ENCODE measurements at regions of chr20 and their contacts with region 1.

Region 1: DNA sequence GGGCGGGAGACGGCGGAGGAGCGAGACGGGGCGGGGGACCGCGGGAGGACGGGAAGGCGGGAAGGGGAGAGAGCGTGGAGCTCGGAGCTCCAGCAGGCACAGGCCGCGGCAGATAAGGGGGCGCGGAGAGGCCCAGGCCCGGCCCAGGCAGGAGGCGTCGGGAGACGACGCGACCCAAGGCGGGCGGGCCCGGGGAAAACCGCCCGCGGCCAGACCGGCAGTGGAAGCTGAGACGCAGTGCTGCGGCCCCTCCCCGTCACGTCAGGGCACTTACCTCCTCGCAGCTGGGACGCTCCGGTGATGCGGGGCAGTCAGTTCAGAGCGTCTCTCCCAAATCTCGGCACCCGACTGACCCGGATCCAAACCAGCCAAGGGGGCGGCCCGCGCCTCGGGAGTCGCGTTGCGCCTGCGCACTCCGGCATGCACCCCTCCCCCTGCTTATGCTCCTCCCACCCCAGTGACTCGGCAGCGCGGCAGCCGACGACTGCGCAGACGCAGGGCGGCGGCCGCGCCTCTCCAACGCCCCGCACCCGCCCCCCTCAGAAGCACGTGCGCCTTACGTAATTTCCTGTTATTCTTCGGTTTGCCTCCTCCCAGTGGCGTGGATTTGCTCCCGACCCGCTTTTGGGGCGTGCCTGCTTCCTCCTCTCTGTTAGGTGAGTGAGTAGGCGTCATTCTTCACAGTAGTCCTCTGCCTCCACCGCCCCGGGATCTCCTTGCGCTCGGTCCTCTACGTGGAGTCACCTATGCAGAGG is at the start of gene OSER1:
- DNase-seq: peak; percentile 98
- H3K4me3 ChIP-seq: peak within 1 kb of the TSS; percentile 61 to 84 (median 79)
- H3K27ac ChIP-seq: peak within 1 kb of the TSS; percentile 87
- H3K4me1 ChIP-seq: peaks cover 27% of the 10 kb centered on the region
- H3K27me3 ChIP-seq: no peaks in the 10 kb centered on the region
- CTCF ChIP-seq: no peak
- POLR2A ChIP-seq: peak; percentile 88
- total RNA-seq, gene OSER1: 28.8 and 30.8 TPM in 2 replicates

Region 2: GRCh38 chr20:44166477-44166876 is 44.1 kb before region 1 on chr20:
- CTCF ChIA-PET with region 1: no interaction called
- POLR2A ChIA-PET with region 1: no interaction called
- dilution Hi-C with region 1: no loop called
- intact Hi-C with region 1: no loop called
- DNase-seq: no peak
- H3K4me3 ChIP-seq: no peak overlapping the region
- H3K27ac ChIP-seq: no peak overlapping the region
- H3K4me1 ChIP-seq: no peaks in the 10 kb centered on the region
- H3K27me3 ChIP-seq: peaks cover 5 to 17% of the 10 kb centered on the region in 2 experiments
- CTCF ChIP-seq: no peak
- POLR2A ChIP-seq: no peak

Region 3: DNA sequence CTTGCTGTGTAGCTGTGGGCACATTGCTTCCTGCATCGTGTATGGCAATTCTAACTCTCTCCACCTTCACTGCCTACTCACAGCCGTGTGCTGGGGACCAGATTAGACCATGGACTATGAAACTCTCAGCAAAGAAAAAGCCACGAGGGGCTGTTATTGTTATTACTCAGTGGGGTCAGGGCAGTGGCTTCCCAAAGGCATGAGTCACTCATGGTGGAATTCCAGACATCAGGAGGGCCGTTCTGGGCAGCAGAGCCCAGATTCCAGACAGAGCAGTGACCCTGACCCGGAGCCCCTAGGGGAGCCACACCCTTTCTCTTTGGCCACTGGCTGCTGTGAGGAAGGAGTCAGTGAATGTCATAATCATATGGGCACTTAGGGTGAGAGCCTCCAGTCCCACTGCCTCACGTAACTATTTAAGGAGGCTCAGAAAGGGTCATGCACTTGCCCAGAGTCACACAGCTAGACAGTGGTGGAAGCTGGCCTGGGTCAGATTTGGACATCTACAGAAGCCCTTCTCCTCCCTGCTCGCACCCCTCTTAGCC is 482.4 kb after region 1 on chr20:
- CTCF ChIA-PET with region 1: no interaction called
- POLR2A ChIA-PET with region 1: no interaction called
- dilution Hi-C with region 1: no loop called
- intact Hi-C with region 1: loop called (anchors 2 kb)
- DNase-seq: peak; percentile 98
- H3K4me3 ChIP-seq: no peak overlapping the region
- H3K27ac ChIP-seq: peak overlapping the region; percentile 93
- H3K4me1 ChIP-seq: peaks cover 33% of the 10 kb centered on the region
- H3K27me3 ChIP-seq: no peaks in the 10 kb centered on the region
- CTCF ChIP-seq: no peak
- POLR2A ChIP-seq: no peak

Measured in endothelial cell of umbilical vein (primary cell).